OCI-LY7 (cell line): ENCODE measurements at regions of chr9 and their contacts with region 1.

Region 1: DNA sequence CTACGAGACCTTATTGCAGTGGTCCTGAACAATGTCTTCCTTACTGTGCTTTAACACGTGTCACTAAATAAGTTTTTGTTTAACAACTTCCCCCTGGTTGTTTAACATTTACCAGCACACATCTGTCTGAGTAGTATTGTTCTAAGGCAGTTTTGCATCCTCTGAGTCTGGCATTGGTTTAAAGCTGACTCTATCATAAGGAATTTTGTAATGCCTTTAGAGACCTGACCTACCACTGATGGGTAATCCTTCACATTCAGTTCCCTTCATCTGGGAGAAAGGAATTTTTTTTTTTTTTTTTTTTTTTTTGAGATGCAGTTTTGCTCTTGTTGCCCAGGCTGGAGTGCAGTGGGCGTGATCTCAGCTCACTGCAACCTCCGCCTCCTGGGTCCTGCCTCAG is 20.0 kb upstream of the PCAT7 start:
- DNase-seq: no peak
- H3K4me3 ChIP-seq: no peak overlapping the region
- H3K27ac ChIP-seq: peak overlapping the region; percentile 43
- H3K4me1 ChIP-seq: peaks cover 43% of the 10 kb centered on the region
- CTCF ChIP-seq: no peak

Region 2: DNA sequence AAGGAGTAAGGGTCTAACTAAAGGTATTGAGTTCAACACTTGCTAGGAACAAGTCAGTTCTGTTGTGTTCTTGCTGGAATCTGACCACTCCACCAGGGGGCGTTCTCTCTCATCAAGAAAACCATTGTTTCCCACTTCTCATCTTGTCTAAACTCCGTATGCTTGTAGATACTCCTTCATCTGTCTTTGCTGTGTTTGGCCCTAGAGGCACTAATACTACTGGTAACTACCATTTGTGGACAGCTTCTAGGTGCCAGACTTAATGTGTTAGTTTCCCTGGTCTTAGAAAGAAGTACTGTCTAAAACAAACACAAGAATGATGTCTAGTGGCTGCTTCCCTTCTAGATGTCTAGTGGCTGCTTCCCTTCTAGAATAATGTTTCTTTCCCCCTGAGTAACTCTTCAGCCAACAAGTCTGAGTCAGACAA is 469.4 kb before region 1 on chr9:
- CTCF ChIA-PET with region 1: no interaction called
- POLR2A ChIA-PET with region 1: no interaction called
- intact Hi-C with region 1: loop called (anchors 10 kb)
- DNase-seq: peak; percentile 83
- H3K4me3 ChIP-seq: no peak overlapping the region
- H3K27ac ChIP-seq: no peak overlapping the region
- H3K4me1 ChIP-seq: no peaks in the 10 kb centered on the region
- CTCF ChIP-seq: peak; percentile 95

Region 3: DNA sequence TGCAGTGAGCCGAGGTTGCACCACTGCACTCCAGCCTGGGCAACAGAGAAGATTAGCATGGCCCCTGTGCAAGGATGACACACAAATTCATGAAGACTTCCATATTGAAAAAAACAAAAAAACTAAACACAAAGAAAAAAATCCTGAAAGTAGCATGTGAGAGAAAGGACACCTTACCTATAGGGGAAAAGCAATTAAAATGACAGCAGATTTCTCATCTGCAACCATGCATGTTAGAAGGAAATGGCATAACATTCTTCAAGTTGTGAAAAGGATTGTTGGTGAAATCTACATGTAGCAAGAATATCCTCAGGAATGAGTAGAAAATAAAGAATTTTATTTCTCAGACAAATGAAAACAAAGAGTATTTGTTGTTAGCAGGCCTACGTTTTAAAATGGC is 289.2 kb before region 1 on chr9:
- CTCF ChIA-PET with region 1: no interaction called
- POLR2A ChIA-PET with region 1: no interaction called
- intact Hi-C with region 1: no loop called
- DNase-seq: no peak
- H3K4me3 ChIP-seq: no peak overlapping the region
- H3K27ac ChIP-seq: no peak overlapping the region
- H3K4me1 ChIP-seq: no peaks in the 10 kb centered on the region
- CTCF ChIP-seq: no peak

Region 4: DNA sequence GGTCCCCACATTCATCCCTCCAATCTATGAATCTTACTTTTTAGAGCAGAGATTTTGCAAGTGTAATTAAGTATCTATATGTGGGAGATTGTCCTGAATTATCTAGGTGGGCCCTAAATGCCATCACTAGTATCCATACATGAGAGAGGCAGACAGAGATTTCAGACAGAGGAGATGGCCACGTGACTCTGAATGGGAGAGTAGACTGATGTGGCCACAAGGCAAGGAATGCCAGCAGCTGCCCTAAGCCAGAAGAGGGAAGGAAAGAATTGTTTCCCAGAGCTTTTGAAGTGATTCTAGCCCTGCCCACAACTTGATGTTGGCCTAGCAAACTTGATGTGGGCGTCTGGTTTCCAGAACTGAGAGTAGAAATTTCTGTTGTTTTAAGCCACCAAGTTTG is 70.1 kb before region 1 on chr9:
- CTCF ChIA-PET with region 1: no interaction called
- POLR2A ChIA-PET with region 1: no interaction called
- intact Hi-C with region 1: loop called (anchors 2 kb)
- DNase-seq: no peak
- H3K4me3 ChIP-seq: no peak overlapping the region
- H3K27ac ChIP-seq: peak overlapping the region; percentile 17
- H3K4me1 ChIP-seq: peaks cover 14% of the 10 kb centered on the region
- CTCF ChIP-seq: no peak

Region 5: GRCh38 chr9:94576131-94576530 is 41.2 kb after region 1 on chr9:
- CTCF ChIA-PET with region 1: no interaction called
- POLR2A ChIA-PET with region 1: no interaction called
- intact Hi-C with region 1: no loop called
- DNase-seq: no peak
- H3K4me3 ChIP-seq: no peak overlapping the region
- H3K27ac ChIP-seq: no peak overlapping the region
- H3K4me1 ChIP-seq: peaks cover 34% of the 10 kb centered on the region
- CTCF ChIP-seq: no peak

Region 6: DNA sequence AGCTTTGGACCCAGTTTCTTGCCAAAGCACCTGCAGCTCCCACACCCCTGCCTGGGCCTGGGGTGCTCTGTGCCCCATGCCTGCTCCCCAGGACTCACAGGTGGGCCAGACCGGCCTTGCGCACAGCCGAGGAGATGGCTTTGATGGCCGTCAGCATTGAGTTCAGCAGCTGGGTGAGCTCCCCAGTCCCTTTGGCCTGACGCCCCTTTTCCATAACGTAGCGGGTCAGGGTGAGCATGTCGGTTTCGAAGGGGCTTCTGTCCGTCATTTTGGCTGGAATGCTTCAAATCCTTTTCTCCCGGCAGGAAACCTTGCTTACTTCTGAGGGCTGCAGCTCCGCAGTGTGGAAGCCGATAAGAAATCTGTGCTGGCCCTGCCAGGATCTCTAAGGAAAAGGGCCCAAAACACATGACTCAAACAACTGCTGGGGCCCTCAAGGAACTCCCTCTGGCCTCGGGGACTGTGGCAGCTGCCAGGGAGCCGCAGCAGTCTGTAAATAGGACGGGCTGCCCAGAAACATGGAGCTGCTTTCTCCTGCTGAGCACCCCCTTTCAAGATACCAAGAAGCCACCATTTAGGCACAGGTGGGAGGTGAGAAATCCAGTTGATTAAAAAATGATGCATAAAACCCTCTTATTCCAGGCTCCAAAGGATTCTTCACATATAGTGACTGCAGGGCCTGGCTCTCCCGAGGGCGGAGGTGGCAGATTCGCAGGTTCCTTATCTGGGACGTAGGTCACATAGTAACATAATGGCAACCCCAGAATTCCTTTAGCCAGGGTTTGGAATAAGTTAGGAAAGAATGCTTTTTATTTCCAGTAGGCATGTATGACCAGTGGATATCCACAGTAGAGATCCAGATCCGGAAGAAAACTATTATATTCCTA is 58.8 kb after region 1 on chr9 and contains the start of gene FBP2:
- CTCF ChIA-PET with region 1: no interaction called
- POLR2A ChIA-PET with region 1: no interaction called
- intact Hi-C with region 1: no loop called
- DNase-seq: no peak
- H3K4me3 ChIP-seq: no peak within 1 kb of the TSS
- H3K27ac ChIP-seq: no peak within 1 kb of the TSS
- H3K4me1 ChIP-seq: peaks cover 33% of the 10 kb centered on the region
- CTCF ChIP-seq: no peak
- total RNA-seq, gene FBP2: not detected in 2 replicates